A673 (cell line): ENCODE measurements at regions of chr2 and their contacts with region 1.

Region 1: DNA sequence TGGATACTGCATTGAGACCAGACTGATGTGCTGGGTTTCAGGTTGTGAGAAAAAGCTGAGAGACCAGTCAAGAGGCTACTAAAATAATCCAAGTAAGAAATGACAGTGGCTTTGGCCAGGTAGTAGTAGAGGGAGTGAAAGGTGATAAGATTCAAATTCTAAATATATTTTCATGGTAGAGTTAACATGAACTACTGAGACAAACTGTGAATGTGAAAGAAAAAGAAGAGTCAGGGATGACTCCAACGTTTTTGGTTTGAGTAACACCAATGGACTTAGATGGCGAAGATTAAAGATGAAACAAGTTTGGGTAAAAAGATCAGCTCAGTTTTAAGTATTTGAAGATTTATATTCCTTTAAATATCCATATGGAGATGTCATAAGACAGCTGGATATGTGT is 209.4 kb downstream of the ZEB2 start:
- DNase-seq: no peak
- H3K4me3 ChIP-seq: no peak overlapping the region
- H3K27ac ChIP-seq: no peak overlapping the region
- H3K4me1 ChIP-seq: peaks cover 3% of the 10 kb centered on the region
- H3K27me3 ChIP-seq: no peaks in the 10 kb centered on the region
- CTCF ChIP-seq: no peak

Region 2: DNA sequence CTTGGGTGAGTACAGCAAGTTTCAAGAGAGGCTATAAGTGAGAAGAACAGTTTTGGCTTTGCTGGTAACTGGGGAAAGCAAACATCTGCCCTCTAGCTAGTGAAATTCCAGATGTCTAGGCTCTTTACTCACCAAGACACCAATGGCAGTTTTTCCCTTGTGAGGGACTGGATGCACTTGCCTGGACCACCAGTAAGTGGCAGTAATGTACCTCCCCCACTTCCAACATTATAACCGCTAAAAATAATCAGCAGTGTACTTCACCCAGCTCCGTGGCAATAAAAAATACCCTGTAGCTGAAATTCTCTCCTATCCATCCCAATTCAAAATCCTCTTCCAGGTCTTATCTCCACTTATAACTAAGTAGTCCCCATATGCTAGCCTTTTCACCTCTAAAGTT is 797.4 kb before region 1 on chr2:
- CTCF ChIA-PET with region 1: no interaction called
- POLR2A ChIA-PET with region 1: no interaction called
- intact Hi-C with region 1: loop called (anchors 10 kb)
- DNase-seq: peak; percentile 75
- H3K4me3 ChIP-seq: no peak overlapping the region
- H3K27ac ChIP-seq: no peak overlapping the region
- H3K4me1 ChIP-seq: no peaks in the 10 kb centered on the region
- H3K27me3 ChIP-seq: no peaks in the 10 kb centered on the region
- CTCF ChIP-seq: peak; percentile 85

Region 3: GRCh38 chr2:143841935-143842334 is 468.5 kb before region 1 on chr2:
- CTCF ChIA-PET with region 1: no interaction called
- POLR2A ChIA-PET with region 1: no interaction called
- intact Hi-C with region 1: loop called (anchors 10 kb)
- DNase-seq: peak; percentile 48
- H3K4me3 ChIP-seq: no peak overlapping the region
- H3K27ac ChIP-seq: no peak overlapping the region
- H3K4me1 ChIP-seq: peaks cover 8% of the 10 kb centered on the region
- H3K27me3 ChIP-seq: no peaks in the 10 kb centered on the region
- CTCF ChIP-seq: peak; percentile 48

Region 4: DNA sequence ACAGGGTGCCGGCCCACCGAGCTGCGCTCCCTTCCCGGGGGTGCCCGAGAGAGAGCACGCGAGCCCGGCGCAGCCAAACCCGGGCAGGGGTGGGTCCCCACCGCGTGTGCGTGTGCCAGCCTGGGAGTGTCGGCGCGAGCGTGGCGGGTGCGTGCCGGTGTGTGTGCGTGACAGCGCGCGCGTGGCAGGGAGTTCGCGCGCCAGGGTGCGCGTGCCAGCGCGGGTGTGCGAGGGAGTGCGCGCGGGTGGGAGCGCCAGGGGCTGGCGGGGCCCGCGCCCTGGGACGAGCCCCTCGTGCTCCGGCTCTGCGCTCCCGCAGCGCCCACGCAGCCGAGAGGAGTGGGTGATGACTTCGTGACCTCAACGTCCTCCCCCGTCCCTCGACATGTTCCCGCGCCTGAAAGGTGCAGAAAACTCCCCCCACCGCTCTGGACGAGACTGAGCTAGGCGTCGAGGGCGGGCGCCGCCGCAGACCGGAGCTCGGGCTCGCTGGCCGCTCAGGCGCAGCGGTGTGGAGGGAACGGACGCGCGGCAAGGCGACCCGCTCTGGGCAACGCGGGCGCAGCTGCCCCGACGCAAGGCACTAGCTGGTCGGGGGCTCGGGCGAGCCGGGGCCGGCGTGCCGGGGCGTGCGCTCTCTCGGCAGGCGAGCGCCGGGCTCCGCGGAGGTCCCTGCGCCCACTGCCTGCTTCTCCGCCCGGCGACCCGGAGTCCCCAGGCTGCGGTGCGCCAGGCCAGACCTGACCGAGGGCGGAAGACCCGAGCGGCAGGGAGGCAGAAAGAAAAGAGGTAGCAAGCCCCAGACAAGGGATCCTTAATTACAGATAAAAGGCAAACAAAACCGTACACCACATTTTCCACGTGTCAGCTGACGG is 373.4 kb before region 1 on chr2:
- CTCF ChIA-PET with region 1: no interaction called
- POLR2A ChIA-PET with region 1: no interaction called
- intact Hi-C with region 1: loop called (anchors 10 kb)
- DNase-seq: peak; percentile 45
- H3K4me3 ChIP-seq: peak overlapping the region; percentile 53
- H3K27ac ChIP-seq: no peak overlapping the region
- H3K4me1 ChIP-seq: peaks cover 32% of the 10 kb centered on the region
- H3K27me3 ChIP-seq: no peaks in the 10 kb centered on the region
- CTCF ChIP-seq: no peak